AG04450 (cell line): ENCODE measurements at regions of chr1 and their contacts with region 1.

Region 1: GRCh38 chr1:109532365-109533136 is 7.1 kb upstream of the GPR61 start:
- DNase-seq: peak; percentile 55
- H3K4me3 ChIP-seq: no peak overlapping the region
- H3K27ac ChIP-seq: peak overlapping the region; percentile 52
- H3K27me3 ChIP-seq: peaks cover 7% of the 10 kb centered on the region
- CTCF ChIP-seq: peak; percentile 98

Region 2: DNA sequence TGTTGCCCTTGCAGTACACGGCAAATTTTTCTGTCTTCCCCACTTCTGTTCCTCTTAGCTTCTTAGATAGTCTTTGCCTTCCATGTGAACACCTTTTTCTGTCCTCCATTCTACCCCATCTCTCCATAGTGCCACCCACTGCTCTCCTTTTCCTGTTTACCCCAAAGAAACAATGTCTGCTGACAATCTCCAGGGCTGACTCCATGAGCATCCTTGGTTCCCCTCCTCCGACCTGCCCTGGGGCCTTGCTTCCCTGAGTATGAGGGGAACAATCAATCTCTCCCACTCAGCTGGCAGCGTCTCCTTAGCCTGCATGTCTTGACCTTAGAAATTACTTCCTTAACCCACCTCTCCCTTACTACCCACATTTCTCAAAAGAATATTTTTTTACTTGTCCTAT is 213.4 kb before region 1 on chr1:
- CTCF ChIA-PET with region 1: no interaction called
- POLR2A ChIA-PET with region 1: no interaction called
- DNase-seq: no peak
- H3K4me3 ChIP-seq: no peak overlapping the region
- H3K27ac ChIP-seq: no peak overlapping the region
- H3K27me3 ChIP-seq: no peaks in the 10 kb centered on the region
- CTCF ChIP-seq: no peak

Region 3: GRCh38 chr1:109397538-109398342 is 134.8 kb before region 1 on chr1 and contains the start of gene SORT1:
- CTCF ChIA-PET with region 1: interaction called, 32 read pairs
- POLR2A ChIA-PET with region 1: no interaction called
- DNase-seq: peak; percentile 78
- H3K4me3 ChIP-seq: peak within 1 kb of the TSS; percentile 65
- H3K27ac ChIP-seq: no peak within 1 kb of the TSS
- H3K27me3 ChIP-seq: no peaks in the 10 kb centered on the region
- CTCF ChIP-seq: no peak
- polyA plus RNA-seq, gene SORT1: 37.2 and 42.8 TPM in 2 replicates

Region 4: GRCh38 chr1:109412551-109412950 is 120.0 kb before region 1 on chr1:
- CTCF ChIA-PET with region 1: interaction called, 12 read pairs
- POLR2A ChIA-PET with region 1: no interaction called
- DNase-seq: no peak
- H3K4me3 ChIP-seq: no peak overlapping the region
- H3K27ac ChIP-seq: no peak overlapping the region
- H3K27me3 ChIP-seq: no peaks in the 10 kb centered on the region
- CTCF ChIP-seq: no peak

Region 5: DNA sequence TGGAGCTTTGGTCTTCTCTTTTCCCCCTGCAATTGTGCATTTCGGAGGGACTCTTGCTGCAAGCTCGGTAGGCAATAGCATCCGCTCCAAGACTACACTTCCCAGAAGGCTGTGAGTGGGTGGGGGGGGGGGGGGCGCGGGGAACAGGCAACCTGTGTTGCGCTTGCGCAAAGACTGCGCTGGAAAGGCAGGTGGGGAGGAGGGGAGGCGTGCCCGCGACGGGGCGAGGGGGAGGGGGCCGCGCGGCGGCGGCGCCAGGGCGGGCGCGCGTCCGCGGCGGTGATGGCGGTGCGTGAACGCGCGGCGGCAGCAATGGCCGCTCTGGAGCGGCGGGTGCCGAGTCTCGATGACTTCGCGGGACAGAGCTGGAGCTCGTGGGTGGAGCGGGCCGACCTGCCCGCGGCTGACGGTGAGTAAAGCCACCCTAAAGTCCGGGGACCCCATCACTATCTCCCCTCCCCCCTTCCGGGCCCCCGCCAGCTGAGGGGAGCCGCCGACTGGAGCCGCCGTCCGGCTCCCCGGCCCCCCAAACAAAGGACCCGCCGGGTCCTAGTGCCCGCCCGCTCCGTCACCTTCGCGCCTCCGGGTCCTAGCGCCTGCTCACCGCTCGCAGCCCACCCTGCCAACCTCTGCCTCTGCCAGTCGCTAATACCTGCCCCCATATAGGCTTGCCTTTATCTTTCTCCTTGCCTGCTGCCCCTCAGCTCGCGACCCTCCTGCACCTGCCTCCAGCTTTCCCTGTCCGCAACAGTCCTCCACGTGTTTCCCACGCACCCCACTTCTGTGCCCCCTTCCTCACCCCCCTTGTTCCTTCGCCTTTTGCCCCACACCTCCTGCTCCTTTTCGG is 48.7 kb before region 1 on chr1 and contains the start of gene ATXN7L2:
- CTCF ChIA-PET with region 1: interaction called, 1,351 read pairs
- POLR2A ChIA-PET with region 1: no interaction called
- DNase-seq: peak; percentile 74
- H3K4me3 ChIP-seq: peak within 1 kb of the TSS; percentile 84
- H3K27ac ChIP-seq: peak within 1 kb of the TSS; percentile 81
- H3K27me3 ChIP-seq: peaks cover 20% of the 10 kb centered on the region
- CTCF ChIP-seq: no peak
- polyA plus RNA-seq, gene ATXN7L2: 1.5 TPM in 2 replicates

Region 6: GRCh38 chr1:109516872-109517271 is 15.7 kb before region 1 on chr1:
- CTCF ChIA-PET with region 1: interaction called, 1,351 read pairs
- POLR2A ChIA-PET with region 1: no interaction called
- DNase-seq: no peak
- H3K4me3 ChIP-seq: no peak overlapping the region
- H3K27ac ChIP-seq: no peak overlapping the region
- H3K27me3 ChIP-seq: peaks cover 19% of the 10 kb centered on the region
- CTCF ChIP-seq: no peak

Region 7: GRCh38 chr1:109598655-109599054 is 66.1 kb after region 1 on chr1:
- CTCF ChIA-PET with region 1: interaction called, 11 read pairs
- POLR2A ChIA-PET with region 1: no interaction called
- DNase-seq: no peak
- H3K4me3 ChIP-seq: no peak overlapping the region
- H3K27ac ChIP-seq: no peak overlapping the region
- H3K27me3 ChIP-seq: no peaks in the 10 kb centered on the region
- CTCF ChIP-seq: peak; percentile 25